Activated CD4-positive, alpha-beta T cell treated with anti-CD3 and anti-CD28 coated beads for 36 hours (primary cell): ENCODE measurements at regions of chr11 and their contacts with region 1.

Region 1: DNA sequence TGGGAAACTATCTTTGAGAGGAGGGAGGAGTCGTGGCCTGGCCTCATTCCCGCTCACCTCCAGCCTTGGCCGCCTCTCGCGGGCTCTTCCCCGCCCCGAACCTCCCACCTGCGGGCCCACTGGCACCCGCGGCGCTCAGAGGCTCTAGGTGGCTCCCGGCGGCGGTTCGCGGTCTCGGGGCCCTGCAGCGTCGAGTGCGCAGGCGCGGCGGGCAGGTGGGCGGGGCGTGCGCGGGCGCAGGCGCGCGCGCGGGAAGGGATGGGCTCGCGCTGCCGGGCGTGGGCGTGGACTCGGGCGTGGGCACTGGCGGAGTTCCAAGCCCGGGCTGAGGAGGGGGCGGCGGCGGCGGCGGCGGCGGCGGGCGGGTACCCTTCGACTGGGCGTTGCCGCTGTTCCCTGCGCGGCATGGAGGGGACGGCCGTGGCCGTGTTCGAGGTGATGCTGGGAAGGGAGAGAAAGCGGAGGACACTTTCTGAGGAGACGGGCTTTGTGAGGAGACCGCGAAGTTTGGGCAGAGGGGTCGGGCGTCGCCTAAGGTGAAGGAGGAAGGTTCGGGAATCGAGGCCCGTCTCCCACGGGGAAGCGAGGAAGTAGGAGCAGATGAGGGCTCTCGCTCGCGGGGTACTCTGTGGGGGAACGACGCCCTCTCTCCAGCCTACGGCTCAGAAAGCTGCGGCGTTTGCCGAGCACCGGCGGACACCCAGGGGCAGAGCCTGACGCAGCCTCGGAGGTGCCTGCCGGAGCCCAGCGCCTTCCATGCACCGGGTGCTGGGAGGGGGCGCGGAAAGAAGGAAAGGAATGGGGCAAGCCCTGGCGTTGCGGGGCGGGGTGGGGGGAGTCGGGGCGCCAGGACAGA is 15.7 kb upstream of the SPTBN2 start:
- DNase-seq: peak; percentile 93
- ATAC-seq: peak; percentile 88
- H3K4me3 Mint-ChIP-seq: peak overlapping the region; percentile 95
- H3K27ac Mint-ChIP-seq: peak overlapping the region; percentile 84
- H3K4me1 Mint-ChIP-seq: peaks cover 7% of the 10 kb centered on the region
- H3K27me3 Mint-ChIP-seq: no peaks in the 10 kb centered on the region

Region 2: GRCh38 chr11:66592457-66593302 is 152.0 kb before region 1 on chr11 and contains the starts of genes CCDC87 and CCS:
- CTCF ChIA-PET with region 1: no interaction called
- POLR2A ChIA-PET with region 1: no interaction called
- intact Hi-C with region 1: loop called in 1 of 2 experiments (anchors 2 kb)
- DNase-seq: peak; percentile 99
- ATAC-seq: peak; percentile 100
- H3K4me3 Mint-ChIP-seq: peak within 1 kb of the TSS; percentile 93
- H3K27ac Mint-ChIP-seq: peak within 1 kb of the TSS; percentile 98
- H3K4me1 Mint-ChIP-seq: peaks cover 19% of the 10 kb centered on the region
- H3K27me3 Mint-ChIP-seq: no peaks in the 10 kb centered on the region
- total RNA-seq, gene CCDC87: 0.09 to 0.14 TPM
- total RNA-seq, gene CCS: 16.3 to 24.0 TPM

Region 3: DNA sequence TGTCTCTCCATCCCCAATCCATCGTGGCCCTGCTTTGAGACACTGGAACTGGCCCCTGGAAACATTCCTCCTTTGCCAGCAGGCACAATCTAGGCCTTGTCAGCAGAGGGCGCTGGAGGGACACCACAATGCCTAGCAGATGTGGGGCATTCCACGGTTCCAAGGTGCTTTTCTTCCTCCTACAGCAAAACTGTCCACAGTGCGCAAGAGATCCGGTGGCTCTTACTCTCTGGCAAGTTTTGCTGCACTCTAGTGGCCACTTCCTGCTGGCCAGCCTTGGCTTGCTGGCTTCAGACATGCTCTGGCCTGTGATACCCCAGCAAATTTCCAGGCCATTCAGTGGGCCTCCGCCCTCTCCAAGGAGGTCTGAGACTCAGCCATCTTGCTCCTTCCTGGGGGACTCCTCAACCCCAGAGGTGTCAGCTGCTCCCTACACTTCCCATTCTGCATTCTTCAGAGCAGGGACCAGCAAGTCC is 49.9 kb before region 1 on chr11:
- CTCF ChIA-PET with region 1: no interaction called
- POLR2A ChIA-PET with region 1: no interaction called
- intact Hi-C with region 1: loop called in 1 of 2 experiments (anchors 2 kb)
- DNase-seq: peak; percentile 92
- ATAC-seq: peak; percentile 97
- H3K4me3 Mint-ChIP-seq: no peak overlapping the region
- H3K27ac Mint-ChIP-seq: no peak overlapping the region
- H3K4me1 Mint-ChIP-seq: no peaks in the 10 kb centered on the region
- H3K27me3 Mint-ChIP-seq: no peaks in the 10 kb centered on the region

Region 4: DNA sequence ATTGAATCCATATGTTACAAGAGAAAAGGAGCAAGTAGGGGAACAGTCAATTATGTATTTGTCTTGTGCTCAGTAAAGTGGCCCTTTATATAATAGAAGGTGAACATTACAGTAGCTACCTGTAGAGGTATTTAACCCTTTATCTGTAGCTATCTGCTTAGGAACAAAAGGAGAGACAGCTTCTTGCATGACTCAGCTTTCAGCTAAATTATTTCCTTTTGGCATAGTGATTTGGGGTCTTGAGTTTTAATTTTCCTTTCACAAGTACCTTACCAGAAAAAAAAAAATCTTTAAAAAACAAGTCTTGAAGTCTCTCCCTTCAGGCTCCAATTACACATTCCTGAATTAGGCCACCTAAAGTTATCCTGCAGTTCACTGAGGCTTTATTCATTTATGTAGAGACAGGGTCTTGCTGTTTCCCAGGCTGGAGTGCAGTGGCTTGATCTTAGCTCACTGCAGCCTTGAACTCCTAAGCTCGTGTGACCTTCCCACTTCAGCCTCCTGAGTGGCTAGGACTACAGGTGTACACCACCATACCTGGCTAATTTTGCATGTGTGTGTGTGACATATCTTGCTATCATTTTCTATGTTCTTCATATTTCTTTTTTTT is 66.0 kb after region 1 on chr11:
- CTCF ChIA-PET with region 1: no interaction called
- POLR2A ChIA-PET with region 1: no interaction called
- intact Hi-C with region 1: no loop called
- DNase-seq: no peak
- ATAC-seq: no peak
- H3K4me3 Mint-ChIP-seq: no peak overlapping the region
- H3K27ac Mint-ChIP-seq: no peak overlapping the region
- H3K4me1 Mint-ChIP-seq: peaks cover 3% of the 10 kb centered on the region
- H3K27me3 Mint-ChIP-seq: no peaks in the 10 kb centered on the region

Region 5: GRCh38 chr11:66855574-66856495 is 111.1 kb after region 1 on chr11:
- CTCF ChIA-PET with region 1: no interaction called
- POLR2A ChIA-PET with region 1: no interaction called
- intact Hi-C with region 1: loop called in 1 of 2 experiments (anchors 1 kb)
- DNase-seq: peak; percentile 94
- ATAC-seq: peak; percentile 83
- H3K4me3 Mint-ChIP-seq: peak overlapping the region; percentile 82
- H3K27ac Mint-ChIP-seq: peak overlapping the region; percentile 73
- H3K4me1 Mint-ChIP-seq: peaks cover 11% of the 10 kb centered on the region
- H3K27me3 Mint-ChIP-seq: no peaks in the 10 kb centered on the region